Astrocyte of the cerebellum (primary cell): ENCODE measurements at regions of chr12 and their contacts with region 1.

Region 1: DNA sequence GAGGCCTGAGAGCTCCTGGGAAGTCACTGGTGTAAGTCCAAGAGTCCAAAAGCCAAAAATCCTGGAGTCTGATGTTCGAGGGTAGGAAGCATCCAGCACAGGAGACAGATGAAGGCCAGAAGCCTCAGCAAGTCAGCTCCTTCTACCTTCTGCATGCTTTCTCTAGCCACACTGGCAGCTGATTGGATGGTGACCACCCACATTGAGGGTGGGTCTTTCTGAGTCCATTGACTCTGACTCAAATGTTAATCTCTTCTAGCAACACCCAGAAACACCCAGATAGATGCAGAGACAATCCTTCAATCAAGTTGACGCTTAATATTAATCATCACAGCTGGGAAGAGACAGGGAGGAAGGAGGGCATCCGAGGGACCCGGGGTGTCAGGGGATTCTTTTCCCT is 305.8 kb downstream of the AACS start:
- DNase-seq: no peak
- H3K4me3 ChIP-seq: no peak overlapping the region
- CTCF ChIP-seq: no peak

Region 2: GRCh38 chr12:125287101-125287847 is 83.8 kb before region 1 on chr12:
- in situ Hi-C with region 1: loop called (anchors 5 kb)
- DNase-seq: no peak
- H3K4me3 ChIP-seq: no peak overlapping the region
- CTCF ChIP-seq: no peak